H1 (cell line): ENCODE measurements at regions of chr19 and their contacts with region 1.

Region 1: DNA sequence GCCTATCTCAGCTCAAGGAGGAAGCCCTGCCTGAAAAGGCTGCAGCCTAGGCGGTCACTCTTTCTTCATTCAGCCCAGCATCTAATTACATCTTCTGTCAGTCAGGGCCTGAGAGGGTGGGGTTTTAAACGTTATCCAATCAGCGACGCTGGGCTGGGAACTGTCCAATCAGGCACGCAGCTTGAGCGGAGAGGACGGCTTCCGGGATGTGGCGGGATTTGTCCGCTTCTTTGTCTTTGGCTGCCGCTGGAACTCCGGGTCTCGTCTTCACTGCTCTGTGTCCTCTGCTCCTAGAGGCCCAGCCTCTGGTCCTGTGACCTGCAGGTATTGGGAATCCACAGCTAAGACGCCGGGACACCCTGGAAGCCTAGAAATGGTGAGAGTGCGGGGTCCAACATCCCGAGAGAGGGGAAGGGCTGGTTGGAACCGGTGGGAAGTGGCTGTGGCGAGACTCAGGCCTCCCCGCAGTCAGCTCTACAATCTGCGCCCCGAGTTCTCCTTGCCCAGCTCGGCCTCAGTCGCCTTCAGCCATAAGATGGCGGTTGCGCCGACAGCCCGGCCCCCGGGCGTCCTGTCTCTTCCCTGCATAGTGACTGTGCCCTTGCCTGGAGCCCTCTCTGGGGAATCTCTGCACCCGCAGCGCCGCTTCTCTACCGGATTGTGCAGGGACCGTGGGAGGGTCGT is at the start of gene ZNF738:
- DNase-seq: peak; percentile 88 to 94
- H3K4me3 ChIP-seq: peak within 1 kb of the TSS; percentile 91 to 99 (median 96)
- H3K27ac ChIP-seq: peak within 1 kb of the TSS; percentile 99
- H3K4me1 ChIP-seq: no peaks in the 10 kb centered on the region; a peak in 1 of 7 replicates
- H3K27me3 ChIP-seq: no peaks in the 10 kb centered on the region
- CTCF ChIP-seq: no peak
- EP300 ChIP-seq: no peak
- POLR2A ChIP-seq: peak in 1 of 2 experiments; percentile 98; a peak in 2 of 3 replicates
- RAD21 ChIP-seq: 0 out of 4 replicates have a peak, but pooled peaks of 1 of the 2 experiments have one; percentile 0
- total RNA-seq, gene ZNF738: 78.1 and 80.6 TPM in 2 replicates

Region 2: GRCh38 chr19:21328885-21329605 is 29.9 kb before region 1 on chr19 and contains the start of gene ZNF708:
- CTCF ChIA-PET with region 1: interaction called, 3 read pairs
- POLR2A ChIA-PET with region 1: interaction called, 33 read pairs
- DNase-seq: peak; percentile 80 to 83
- H3K4me3 ChIP-seq: peak within 1 kb of the TSS; percentile 89 to 98 (median 95)
- H3K27ac ChIP-seq: peak within 1 kb of the TSS; percentile 98
- H3K4me1 ChIP-seq: peaks cover 0 to 4% (median 0%) of the 10 kb centered on the region in 4 experiments; a peak in 2 of 7 replicates
- H3K27me3 ChIP-seq: no peaks in the 10 kb centered on the region
- CTCF ChIP-seq: no peak
- EP300 ChIP-seq: no peak
- POLR2A ChIP-seq: peak; percentile 90 to 99
- RAD21 ChIP-seq: no peak
- total RNA-seq, gene ZNF708: 40.0 and 41.5 TPM in 2 replicates

Region 3: DNA sequence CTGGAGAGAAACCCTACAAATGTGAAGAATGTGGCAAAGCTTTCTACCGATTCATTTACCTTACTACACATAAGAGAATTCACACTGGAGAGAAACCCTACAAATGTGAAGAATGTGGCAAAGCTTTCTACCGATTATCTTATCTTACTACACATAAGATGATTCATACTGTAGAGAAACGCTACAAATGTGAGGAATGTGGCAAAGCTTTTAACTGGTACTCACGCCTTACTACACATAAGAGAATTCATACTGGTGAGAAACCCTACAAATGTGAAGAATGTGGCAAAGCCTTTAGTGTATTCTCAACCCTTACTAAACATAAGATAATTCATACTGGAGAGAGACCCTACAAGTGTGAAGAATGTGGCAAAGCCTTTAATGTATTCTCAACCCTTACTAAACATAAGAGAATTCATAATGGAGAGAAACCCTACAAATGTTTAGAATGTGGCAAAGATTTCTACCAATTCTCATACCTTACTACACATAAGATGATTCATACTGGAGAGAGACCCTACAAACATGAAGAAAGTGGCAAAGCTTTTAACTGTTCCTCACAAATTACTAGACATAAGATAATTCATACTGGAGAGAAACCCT is 25.2 kb after region 1 on chr19:
- CTCF ChIA-PET with region 1: no interaction called
- POLR2A ChIA-PET with region 1: interaction called, 11 read pairs
- DNase-seq: no peak
- H3K4me3 ChIP-seq: peak overlapping the region in 1 of 4 experiments; percentile 9; a peak in 1 of 8 replicates
- H3K27ac ChIP-seq: no peak overlapping the region
- H3K4me1 ChIP-seq: no peaks in the 10 kb centered on the region
- H3K27me3 ChIP-seq: no peaks in the 10 kb centered on the region
- CTCF ChIP-seq: no peak
- EP300 ChIP-seq: no peak
- POLR2A ChIP-seq: no peak
- RAD21 ChIP-seq: no peak

Region 4: GRCh38 chr19:21396893-21397572 is 38.1 kb after region 1 on chr19 and contains the start of gene ZNF493:
- CTCF ChIA-PET with region 1: no interaction called
- POLR2A ChIA-PET with region 1: interaction called, 20 read pairs
- DNase-seq: peak; percentile 87 to 90
- H3K4me3 ChIP-seq: peak within 1 kb of the TSS; percentile 91 to 100 (median 96)
- H3K27ac ChIP-seq: peak within 1 kb of the TSS; percentile 92
- H3K4me1 ChIP-seq: no peaks in the 10 kb centered on the region
- H3K27me3 ChIP-seq: no peaks in the 10 kb centered on the region
- CTCF ChIP-seq: no peak
- EP300 ChIP-seq: no peak
- POLR2A ChIP-seq: peak; percentile 87 to 97
- RAD21 ChIP-seq: no peak
- total RNA-seq, gene ZNF493: 31.0 and 32.2 TPM in 2 replicates

Region 5: DNA sequence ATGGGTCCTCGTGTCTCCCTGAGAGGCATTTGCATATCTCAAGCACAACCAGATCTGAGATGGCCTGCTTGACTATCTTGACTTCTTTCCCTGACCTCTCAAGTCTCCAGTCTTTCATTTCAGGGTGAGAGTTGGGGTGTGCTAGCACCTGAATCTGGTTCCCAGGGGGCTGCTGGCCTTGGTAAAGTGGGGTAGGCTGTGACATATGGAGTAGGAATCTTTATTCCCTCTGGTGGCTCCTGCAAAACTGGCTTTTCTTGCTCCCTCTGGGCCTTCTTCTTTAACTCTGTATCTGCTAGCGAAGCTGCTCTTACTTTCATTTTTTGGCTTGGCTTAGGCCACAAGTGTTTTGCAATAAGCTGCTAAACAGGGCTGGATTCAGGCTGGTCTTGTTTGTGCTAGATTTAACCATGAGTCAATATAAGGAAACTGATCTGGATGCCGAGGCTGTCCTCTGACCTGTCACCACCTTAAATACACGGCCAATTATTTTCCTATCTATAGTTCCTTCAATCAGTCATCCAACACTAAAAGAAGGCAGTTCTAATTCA is 80.4 kb after region 1 on chr19:
- CTCF ChIA-PET with region 1: no interaction called
- POLR2A ChIA-PET with region 1: no interaction called
- DNase-seq: no peak
- H3K4me3 ChIP-seq: no peak overlapping the region
- H3K27ac ChIP-seq: no peak overlapping the region
- H3K4me1 ChIP-seq: peaks cover 0 to 3% (median 0%) of the 10 kb centered on the region in 4 experiments; a peak in 3 of 7 replicates
- H3K27me3 ChIP-seq: no peaks in the 10 kb centered on the region
- CTCF ChIP-seq: no peak
- EP300 ChIP-seq: no peak
- POLR2A ChIP-seq: no peak
- RAD21 ChIP-seq: no peak

Region 6: DNA sequence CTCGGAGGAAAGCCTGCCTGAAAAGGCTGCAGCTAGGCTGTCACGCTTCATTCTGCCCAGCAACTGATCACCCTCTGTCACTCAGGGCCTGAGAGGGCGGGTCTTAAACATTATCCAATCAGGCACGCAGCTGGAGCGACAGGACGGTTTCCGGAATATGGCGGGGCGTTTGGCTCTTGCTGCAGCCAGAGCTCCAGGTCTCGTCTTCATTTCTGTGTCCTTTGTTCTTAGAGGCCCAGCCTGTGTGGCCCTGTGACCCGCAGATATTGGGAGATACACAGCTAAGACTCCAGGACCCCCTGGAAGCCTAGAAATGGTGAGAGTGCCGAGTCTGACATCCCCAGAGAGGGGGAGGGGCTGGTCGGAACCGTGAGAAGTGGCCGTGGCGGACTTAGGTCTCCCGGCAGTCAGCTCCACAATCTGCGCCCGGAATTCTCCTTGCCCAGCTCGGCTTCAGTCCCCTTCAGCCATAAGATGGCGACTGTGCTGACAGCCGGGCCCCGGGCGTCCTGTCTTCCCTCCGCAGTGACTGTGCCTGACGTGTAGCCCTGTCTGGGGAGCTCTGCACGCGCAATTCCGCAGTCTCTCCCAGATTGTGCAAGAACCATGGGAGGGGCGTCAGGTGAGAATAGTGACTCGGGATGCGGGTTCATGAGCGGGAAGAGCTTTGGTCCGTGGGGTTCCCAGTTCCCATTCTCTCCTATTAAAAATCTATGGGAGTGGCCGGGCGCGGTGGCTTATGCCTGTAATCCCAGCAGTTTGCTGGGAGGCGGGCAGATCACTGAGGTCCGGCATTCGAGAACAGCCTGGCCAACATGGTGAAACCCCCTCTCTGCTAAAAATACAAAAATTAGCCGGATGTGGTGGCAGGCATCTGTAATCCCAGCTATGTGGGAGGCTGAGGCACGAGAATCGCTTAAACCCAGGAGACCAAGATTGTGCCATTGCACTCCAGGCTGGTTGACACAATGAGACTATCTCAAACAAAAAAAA is 146.8 kb after region 1 on chr19 and contains the start of gene ZNF429:
- CTCF ChIA-PET with region 1: no interaction called
- POLR2A ChIA-PET with region 1: interaction called, 11 read pairs
- DNase-seq: peak; percentile 85 to 88
- H3K4me3 ChIP-seq: peak within 1 kb of the TSS; percentile 78 to 95 (median 92)
- H3K27ac ChIP-seq: peak within 1 kb of the TSS; percentile 84
- H3K4me1 ChIP-seq: no peaks in the 10 kb centered on the region
- H3K27me3 ChIP-seq: no peaks in the 10 kb centered on the region
- CTCF ChIP-seq: peak in 1 of 3 experiments; percentile 11; a peak in 2 of 4 replicates
- EP300 ChIP-seq: no peak
- POLR2A ChIP-seq: peak; percentile 63 to 83
- RAD21 ChIP-seq: peak in 1 of 2 experiments; percentile 20; a peak in 3 of 4 replicates
- total RNA-seq, gene ZNF429: 15.0 and 15.4 TPM in 2 replicates